CD4-positive, alpha-beta memory T cell (primary cell): ENCODE measurements at regions of chr22 and their contacts with region 1.

Region 1: GRCh38 chr22:39236321-39237317 is 8.2 kb downstream of the PDGFB start:
- DNase-seq: peak; percentile 61 to 77 (median 65)
- H3K4me3 ChIP-seq: peak overlapping the region; percentile 12 to 22
- H3K4me3 Mint-ChIP-seq: peak overlapping the region; percentile 55 to 93 (median 82)
- H3K27ac ChIP-seq: no peak overlapping the region
- H3K27ac Mint-ChIP-seq: peak overlapping the region; percentile 50 to 99 (median 81)
- H3K4me1 ChIP-seq: peaks cover 71% of the 10 kb centered on the region
- H3K4me1 Mint-ChIP-seq: peaks cover 37 to 75% (median 55%) of the 10 kb centered on the region in 4 donors
- H3K27me3 ChIP-seq: no peaks in the 10 kb centered on the region
- H3K27me3 Mint-ChIP-seq: peaks cover 5 to 9% of the 10 kb centered on the region in 2 donors

Region 2: DNA sequence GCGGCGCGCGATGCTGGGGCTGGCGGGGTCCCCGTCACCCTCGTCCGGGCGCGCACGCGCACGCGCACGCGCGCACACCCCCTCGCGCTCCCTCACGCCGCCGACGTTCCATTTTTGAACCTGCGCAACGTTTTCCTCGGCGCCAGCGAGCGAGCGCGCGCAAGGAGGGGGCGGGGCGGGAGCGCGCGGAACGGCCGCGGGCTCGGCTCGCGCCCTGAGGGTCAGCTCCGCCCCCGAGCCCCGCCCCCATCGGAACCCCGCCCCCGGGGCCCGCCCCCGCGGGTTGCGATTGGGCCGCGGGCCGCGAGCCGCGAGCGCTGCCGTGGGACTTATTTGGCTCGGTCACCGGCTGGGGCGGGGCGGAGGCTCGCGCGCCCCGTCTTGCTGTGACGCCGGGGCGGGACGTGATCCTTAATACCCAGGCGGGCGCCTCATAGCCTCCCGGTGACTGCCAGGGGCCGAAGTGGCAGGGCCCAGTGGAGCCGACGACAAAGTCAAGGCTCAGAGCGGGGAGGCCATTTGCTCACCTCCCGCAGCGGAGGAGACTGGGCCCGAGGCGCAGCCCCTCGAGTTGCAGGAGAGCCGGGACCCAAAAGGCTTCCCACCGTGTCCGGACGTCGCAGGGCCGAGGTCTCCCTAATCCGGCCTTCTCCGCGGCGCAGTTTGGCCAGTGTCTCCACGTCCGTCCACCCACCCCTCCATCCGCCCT is 84.0 kb before region 1 on chr22 and contains the start of gene CBX7:
- CTCF ChIA-PET with region 1: no interaction called
- POLR2A ChIA-PET with region 1: interaction called, 22 read pairs
- intact Hi-C with region 1: no loop called
- DNase-seq: peak; percentile 90 to 96 (median 94)
- H3K4me3 ChIP-seq: peak within 1 kb of the TSS; percentile 55 to 79
- H3K4me3 Mint-ChIP-seq: peak within 1 kb of the TSS; percentile 84 to 91 (median 88)
- H3K27ac ChIP-seq: peak within 1 kb of the TSS; percentile 78
- H3K27ac Mint-ChIP-seq: peak within 1 kb of the TSS; percentile 88 to 99 (median 93)
- H3K4me1 ChIP-seq: peaks cover 51% of the 10 kb centered on the region
- H3K4me1 Mint-ChIP-seq: peaks cover 22 to 48% (median 35%) of the 10 kb centered on the region in 4 donors
- H3K27me3 ChIP-seq: peaks cover 7% of the 10 kb centered on the region
- H3K27me3 Mint-ChIP-seq: peaks cover 0 to 3% of the 10 kb centered on the region in 2 donors
- total RNA-seq, gene CBX7: 181 to 198 TPM

Region 3: DNA sequence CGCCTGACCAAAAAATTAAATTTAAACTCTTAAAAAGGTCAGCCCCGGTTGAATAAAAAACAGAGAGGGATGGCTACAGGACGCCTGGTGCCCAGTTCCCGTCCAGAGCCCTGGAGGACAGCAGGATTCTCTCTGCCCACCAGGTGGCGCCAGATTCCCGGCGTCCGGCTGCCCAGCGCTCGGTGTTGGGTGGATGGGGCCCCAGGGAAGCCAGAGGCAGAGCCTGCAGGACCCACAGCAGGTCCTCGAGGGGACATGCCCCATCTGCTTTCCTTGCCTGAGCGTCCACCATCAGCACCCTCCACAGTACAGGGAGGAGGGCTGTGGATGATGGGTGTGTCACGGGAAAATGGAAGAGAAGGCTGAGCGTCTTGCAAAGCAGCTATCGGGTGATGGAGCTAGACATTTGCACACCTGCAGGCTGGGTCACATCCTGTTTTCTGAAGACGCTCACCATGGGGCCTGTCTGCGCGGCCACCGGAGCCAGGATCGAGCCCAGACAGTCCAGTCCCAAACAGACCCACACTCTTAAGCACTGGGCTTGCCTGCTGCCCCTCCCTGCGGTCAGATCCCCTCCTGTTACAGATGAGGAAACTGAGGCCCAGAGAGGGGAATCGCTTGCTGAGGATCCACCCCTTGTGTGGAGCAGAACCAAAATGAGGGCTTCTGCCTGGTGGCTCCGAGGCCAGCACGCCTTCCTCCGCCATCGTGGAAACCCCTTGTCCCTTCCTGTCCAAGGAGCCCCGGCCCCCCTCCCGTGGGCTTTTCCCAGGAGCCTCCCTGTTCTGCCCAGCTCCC is 65.6 kb before region 1 on chr22:
- CTCF ChIA-PET with region 1: interaction called, 23 read pairs
- POLR2A ChIA-PET with region 1: interaction called, 167 read pairs
- intact Hi-C with region 1: loop called (anchors 1 kb)
- DNase-seq: peak; percentile 81 to 89 (median 83)
- H3K4me3 ChIP-seq: peak overlapping the region; percentile 49 to 63
- H3K4me3 Mint-ChIP-seq: peak overlapping the region; percentile 51 to 79 (median 68)
- H3K27ac ChIP-seq: peak overlapping the region; percentile 40
- H3K27ac Mint-ChIP-seq: peak overlapping the region; percentile 89 to 95 (median 92)
- H3K4me1 ChIP-seq: peaks cover 52% of the 10 kb centered on the region
- H3K4me1 Mint-ChIP-seq: peaks cover 28 to 49% (median 40%) of the 10 kb centered on the region in 4 donors
- H3K27me3 ChIP-seq: no peaks in the 10 kb centered on the region
- H3K27me3 Mint-ChIP-seq: peaks cover 0 to 2% of the 10 kb centered on the region in 2 donors

Region 4: GRCh38 chr22:39205338-39206021 is 31.1 kb before region 1 on chr22:
- CTCF ChIA-PET with region 1: no interaction called
- POLR2A ChIA-PET with region 1: interaction called, 4 read pairs
- intact Hi-C with region 1: loop called (anchors 5 kb)
- DNase-seq: peak; percentile 40 to 78 (median 56)
- H3K4me3 ChIP-seq: no peak overlapping the region
- H3K4me3 Mint-ChIP-seq: peak overlapping the region in 6 of 8 donors; percentile 27 to 87 (median 41)
- H3K27ac ChIP-seq: no peak overlapping the region
- H3K27ac Mint-ChIP-seq: peak overlapping the region; percentile 37 to 93 (median 84)
- H3K4me1 ChIP-seq: peaks cover 11% of the 10 kb centered on the region
- H3K4me1 Mint-ChIP-seq: peaks cover 9 to 46% (median 21%) of the 10 kb centered on the region in 4 donors
- H3K27me3 ChIP-seq: no peaks in the 10 kb centered on the region
- H3K27me3 Mint-ChIP-seq: no peaks in the 10 kb centered on the region

Region 5: GRCh38 chr22:39253435-39254070 is 16.9 kb after region 1 on chr22:
- CTCF ChIA-PET with region 1: no interaction called
- POLR2A ChIA-PET with region 1: interaction called, 8 read pairs
- intact Hi-C with region 1: loop called (anchors 2 kb)
- DNase-seq: no peak
- H3K4me3 ChIP-seq: no peak overlapping the region
- H3K4me3 Mint-ChIP-seq: no peak overlapping the region
- H3K27ac ChIP-seq: no peak overlapping the region
- H3K27ac Mint-ChIP-seq: no peak overlapping the region
- H3K4me1 ChIP-seq: peaks cover 31% of the 10 kb centered on the region
- H3K4me1 Mint-ChIP-seq: peaks cover 10 to 35% (median 18%) of the 10 kb centered on the region in 4 donors
- H3K27me3 ChIP-seq: no peaks in the 10 kb centered on the region
- H3K27me3 Mint-ChIP-seq: peaks cover 0 to 4% of the 10 kb centered on the region in 2 donors

Region 6: GRCh38 chr22:39306581-39307361 is 70.2 kb after region 1 on chr22:
- CTCF ChIA-PET with region 1: interaction called, 7 read pairs
- POLR2A ChIA-PET with region 1: interaction called, 10 read pairs
- intact Hi-C with region 1: no loop called
- DNase-seq: peak in 4 of 5 donors; percentile 32 to 45 (median 42)
- H3K4me3 ChIP-seq: no peak overlapping the region
- H3K4me3 Mint-ChIP-seq: no peak overlapping the region
- H3K27ac ChIP-seq: no peak overlapping the region
- H3K27ac Mint-ChIP-seq: peak overlapping the region in 1 of 7 donors; percentile 16
- H3K4me1 ChIP-seq: peaks cover 12% of the 10 kb centered on the region
- H3K4me1 Mint-ChIP-seq: peaks cover 5 to 30% (median 12%) of the 10 kb centered on the region in 4 donors
- H3K27me3 ChIP-seq: no peaks in the 10 kb centered on the region
- H3K27me3 Mint-ChIP-seq: peaks cover 0 to 2% of the 10 kb centered on the region in 2 donors

Region 7: DNA sequence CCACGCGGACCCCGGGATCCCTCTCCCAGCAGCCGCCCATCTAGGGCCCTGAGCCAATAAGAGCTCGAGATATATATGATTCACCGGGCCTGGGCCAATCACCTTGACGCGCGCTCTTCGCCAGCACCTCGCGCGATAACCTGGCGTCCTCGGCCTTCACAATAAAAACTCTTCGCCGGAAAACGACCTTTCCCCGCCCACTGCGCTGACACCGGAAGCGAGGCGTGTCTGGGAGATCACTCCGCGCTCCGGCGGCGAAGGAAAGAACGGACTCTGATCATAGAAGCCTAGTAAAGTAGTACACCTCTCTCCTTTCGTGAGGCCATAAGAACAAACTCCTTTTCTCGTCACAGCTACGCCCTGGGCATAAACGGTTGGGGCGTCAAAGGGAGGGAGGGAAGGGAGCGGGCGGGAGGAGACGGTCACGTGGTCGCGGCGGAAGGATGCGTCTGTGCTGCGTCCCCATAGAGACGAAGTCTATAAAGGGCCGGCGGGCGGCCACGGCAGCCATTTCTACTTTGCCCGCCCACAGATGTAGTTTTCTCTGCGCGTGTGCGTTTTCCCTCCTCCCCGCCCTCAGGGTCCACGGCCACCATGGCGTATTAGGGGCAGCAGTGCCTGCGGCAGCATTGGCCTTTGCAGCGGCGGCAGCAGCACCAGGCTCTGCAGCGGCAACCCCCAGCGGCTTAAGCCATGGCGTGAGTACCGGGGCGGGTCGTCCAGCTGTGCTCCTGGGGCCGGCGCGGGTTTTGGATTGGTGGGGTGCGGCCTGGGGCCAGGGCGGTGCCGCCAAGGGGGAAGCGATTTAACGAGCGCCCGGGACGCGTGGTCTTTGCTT is 283.7 kb after region 1 on chr22 and contains the start of gene ATF4:
- CTCF ChIA-PET with region 1: no interaction called
- POLR2A ChIA-PET with region 1: no interaction called
- intact Hi-C with region 1: loop called (anchors 10 kb)
- DNase-seq: peak; percentile 96 to 98 (median 97)
- H3K4me3 ChIP-seq: peak within 1 kb of the TSS; percentile 85 to 96
- H3K4me3 Mint-ChIP-seq: peak within 1 kb of the TSS; percentile 92 to 99 (median 97)
- H3K27ac ChIP-seq: peak within 1 kb of the TSS; percentile 85
- H3K27ac Mint-ChIP-seq: peak within 1 kb of the TSS; percentile 96 to 100 (median 99)
- H3K4me1 ChIP-seq: peaks cover 46% of the 10 kb centered on the region
- H3K4me1 Mint-ChIP-seq: peaks cover 28 to 60% (median 47%) of the 10 kb centered on the region in 4 donors
- H3K27me3 ChIP-seq: no peaks in the 10 kb centered on the region
- H3K27me3 Mint-ChIP-seq: peaks cover 3 to 4% of the 10 kb centered on the region in 2 donors
- total RNA-seq, gene ATF4: 265 to 278 TPM